Heart right ventricle (tissue), 16 donors: ENCODE measurements at regions of chr7 and their contacts with region 1.

Region 1: GRCh38 chr7:130365511-130366441 is 14.5 kb upstream of the CPA1 start:
- DNase-seq: no peak
- ATAC-seq: no peak
- H3K4me3 ChIP-seq: no peak overlapping the region
- H3K27ac ChIP-seq: no peak overlapping the region
- H3K4me1 ChIP-seq: peaks cover 0 to 21% (median 5%) of the 10 kb centered on the region in 9 donors
- H3K27me3 ChIP-seq: no peaks in the 10 kb centered on the region
- CTCF ChIP-seq: no peak

Region 2: GRCh38 chr7:130178251-130178650 is 187.5 kb before region 1 on chr7:
- intact Hi-C with region 1: no loop called
- DNase-seq: no peak
- ATAC-seq: no peak
- H3K4me3 ChIP-seq: no peak overlapping the region
- H3K27ac ChIP-seq: no peak overlapping the region
- H3K4me1 ChIP-seq: no peaks in the 10 kb centered on the region
- H3K27me3 ChIP-seq: no peaks in the 10 kb centered on the region
- CTCF ChIP-seq: no peak

Region 3: GRCh38 chr7:130290745-130291144 is 75.0 kb before region 1 on chr7:
- intact Hi-C with region 1: no loop called
- DNase-seq: no peak
- ATAC-seq: no peak
- H3K4me3 ChIP-seq: no peak overlapping the region
- H3K27ac ChIP-seq: no peak overlapping the region
- H3K4me1 ChIP-seq: peaks cover 0 to 13% (median 0%) of the 10 kb centered on the region in 9 donors
- H3K27me3 ChIP-seq: no peaks in the 10 kb centered on the region
- CTCF ChIP-seq: no peak

Region 4: DNA sequence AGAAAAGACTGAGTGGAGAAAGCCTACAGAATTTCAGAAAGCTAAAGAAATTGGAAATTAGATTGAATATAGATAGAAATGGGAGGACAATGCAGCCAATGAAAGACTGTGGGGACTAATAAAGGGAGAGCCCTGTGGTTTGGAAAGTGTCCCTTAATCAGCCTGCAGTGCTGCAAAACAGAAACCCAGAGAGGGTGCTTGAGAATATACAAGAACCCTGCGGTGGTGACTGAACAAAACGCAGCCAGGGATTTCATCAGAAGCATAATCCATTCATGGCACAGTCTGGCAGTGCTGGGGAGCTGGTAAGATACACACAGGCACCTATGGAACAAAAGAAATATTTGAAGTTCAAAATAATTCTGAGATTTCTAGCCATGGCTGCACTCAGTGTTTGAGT is 55.9 kb after region 1 on chr7:
- intact Hi-C with region 1: loop called in 1 of 10 experiments (anchors 10 kb)
- DNase-seq: no peak
- ATAC-seq: no peak
- H3K4me3 ChIP-seq: no peak overlapping the region
- H3K27ac ChIP-seq: no peak overlapping the region
- H3K4me1 ChIP-seq: peaks cover 0 to 8% (median 0%) of the 10 kb centered on the region in 9 donors
- H3K27me3 ChIP-seq: no peaks in the 10 kb centered on the region
- CTCF ChIP-seq: no peak

Region 5: GRCh38 chr7:130473289-130473688 is 107.5 kb after region 1 on chr7:
- intact Hi-C with region 1: no loop called
- DNase-seq: no peak
- ATAC-seq: peak in 2 of 8 donors; percentile 16 to 25
- H3K4me3 ChIP-seq: no peak overlapping the region
- H3K27ac ChIP-seq: peak overlapping the region in 1 of 10 donors; percentile 67
- H3K4me1 ChIP-seq: peaks cover 0 to 10% (median 0%) of the 10 kb centered on the region in 9 donors
- H3K27me3 ChIP-seq: no peaks in the 10 kb centered on the region
- CTCF ChIP-seq: no peak